ENCODE measurements at regions of chr2 and their contacts with region 1.

Region 1: DNA sequence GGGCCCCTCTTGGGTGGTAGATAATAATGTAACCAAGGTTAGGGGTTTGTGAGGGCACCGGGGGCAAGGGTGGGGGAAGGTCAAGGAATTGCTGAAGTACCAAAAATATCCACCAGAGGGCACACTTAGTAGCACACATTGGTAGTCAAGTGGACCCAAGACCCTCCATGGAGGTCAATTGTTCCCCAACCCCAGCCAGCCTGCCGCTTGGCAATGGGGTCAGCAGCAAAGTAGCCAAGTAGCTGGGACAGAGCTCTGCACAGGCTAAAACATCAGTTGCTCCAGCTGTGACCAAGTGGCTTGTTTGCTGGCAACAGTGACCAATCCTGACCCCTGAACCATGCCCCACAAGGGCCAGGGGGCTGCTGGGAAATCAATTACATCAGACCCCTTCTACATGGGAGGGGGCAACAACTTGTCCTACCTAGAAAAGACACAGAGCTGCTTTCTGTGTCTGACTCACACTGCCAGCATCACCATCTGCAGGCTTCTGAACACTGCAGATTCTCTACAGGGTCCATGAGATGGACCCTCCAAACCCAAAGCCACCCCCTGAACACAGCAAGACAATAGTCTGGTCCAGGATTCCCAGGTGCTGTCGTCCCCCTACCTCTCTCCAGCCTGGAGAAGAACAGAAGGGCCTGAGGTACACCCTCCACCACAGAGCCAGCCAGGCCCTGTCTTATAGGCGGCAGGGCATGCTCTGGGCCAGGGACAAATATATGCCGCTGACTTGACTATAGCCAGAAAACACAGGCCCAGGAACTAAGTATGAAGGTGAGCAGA is 76.0 kb downstream of the EMX1 start:
- DNase-seq: peak; percentile 54
- H3K4me3 ChIP-seq: no peak overlapping the region
- H3K27ac ChIP-seq: no peak overlapping the region
- H3K4me1 ChIP-seq: no peaks in the 10 kb centered on the region
- H3K27me3 ChIP-seq: no peaks in the 10 kb centered on the region
- CTCF ChIP-seq: peak; percentile 95

Region 2: GRCh38 chr2:73163483-73164367 is 170.4 kb after region 1 on chr2:
- intact Hi-C with region 1: loop called (anchors 2 kb)
- DNase-seq: peak; percentile 62
- H3K4me3 ChIP-seq: no peak overlapping the region
- H3K27ac ChIP-seq: no peak overlapping the region
- H3K4me1 ChIP-seq: no peaks in the 10 kb centered on the region
- H3K27me3 ChIP-seq: no peaks in the 10 kb centered on the region
- CTCF ChIP-seq: peak; percentile 85

Region 3: DNA sequence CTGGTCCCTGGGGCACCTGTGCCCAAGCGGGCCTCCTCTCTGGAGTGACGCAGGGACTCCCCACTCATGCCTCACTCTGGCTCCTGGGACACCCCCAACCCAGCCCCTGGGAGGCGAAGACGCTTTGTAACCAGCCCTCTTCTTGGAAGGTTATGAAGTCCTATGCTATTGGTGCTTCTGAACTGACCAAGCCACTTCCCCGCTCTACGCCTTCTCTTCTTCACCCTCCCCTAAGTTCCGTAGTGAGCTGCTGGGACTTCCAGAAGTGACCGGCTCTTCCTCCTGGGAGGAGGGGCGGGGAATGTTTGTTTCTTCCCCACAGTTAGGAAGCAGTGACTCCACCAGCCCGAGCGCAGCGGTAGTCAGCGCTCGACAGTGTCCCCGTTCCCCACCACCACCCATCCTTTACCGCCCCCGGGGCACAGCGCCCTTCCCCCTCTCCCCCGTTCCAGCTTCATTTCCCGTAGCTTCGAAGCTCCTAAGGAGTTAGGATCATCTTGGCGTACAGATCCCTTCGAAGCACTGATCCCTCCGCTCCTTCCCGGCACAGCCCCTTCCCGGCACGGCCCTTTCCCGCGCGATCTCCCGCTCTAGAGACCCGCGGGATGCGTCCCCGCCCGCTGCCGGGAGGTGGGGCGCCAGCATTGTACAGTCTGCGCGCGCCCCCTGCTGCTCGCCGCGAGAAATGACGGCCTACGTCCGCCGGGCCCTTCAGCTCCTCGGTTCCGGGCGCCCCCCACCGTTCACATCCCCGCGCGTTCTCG is 183.7 kb after region 1 on chr2:
- intact Hi-C with region 1: loop called (anchors 5 kb)
- DNase-seq: peak; percentile 93
- H3K4me3 ChIP-seq: peak overlapping the region; percentile 51
- H3K27ac ChIP-seq: peak overlapping the region; percentile 21
- H3K4me1 ChIP-seq: no peaks in the 10 kb centered on the region
- H3K27me3 ChIP-seq: peaks cover 18% of the 10 kb centered on the region
- CTCF ChIP-seq: peak; percentile 99